Activated B cell treated with CpG ODN at 0.5 μM for 24 hours (primary cell): ENCODE measurements at regions of chr2 and their contacts with region 1.

Region 1: DNA sequence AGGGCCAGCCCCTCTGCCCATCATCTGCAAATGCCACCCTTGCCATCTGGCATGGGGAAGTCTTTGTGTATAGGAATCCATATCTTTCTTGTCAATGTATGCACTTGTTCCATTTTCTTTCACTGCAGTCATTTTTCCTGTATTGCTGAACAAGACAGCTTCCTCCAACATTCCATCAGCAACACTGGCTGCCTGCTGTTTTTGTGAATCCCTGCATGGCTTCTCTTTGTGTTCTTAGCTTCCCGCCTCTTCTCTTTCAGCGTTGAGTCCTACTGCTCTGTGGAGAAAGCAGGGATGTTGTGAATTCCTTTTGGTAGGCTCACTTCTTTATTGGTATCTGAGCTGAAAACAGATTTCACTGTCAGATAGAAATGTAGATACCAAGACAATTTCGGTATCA is 150.0 kb downstream of the LPIN1 start:
- DNase-seq: no peak
- ATAC-seq: no peak
- H3K4me3 Mint-ChIP-seq: no peak overlapping the region
- H3K27ac Mint-ChIP-seq: no peak overlapping the region
- H3K4me1 Mint-ChIP-seq: no peaks in the 10 kb centered on the region
- H3K27me3 Mint-ChIP-seq: no peaks in the 10 kb centered on the region
- CTCF ChIP-seq: no peak

Region 2: GRCh38 chr2:12176623-12177454 is 280.5 kb after region 1 on chr2:
- CTCF ChIA-PET with region 1: no interaction called
- POLR2A ChIA-PET with region 1: interaction called, 10 read pairs
- intact Hi-C with region 1: no loop called
- DNase-seq: no peak
- ATAC-seq: no peak
- H3K4me3 Mint-ChIP-seq: peak overlapping the region; percentile 33
- H3K27ac Mint-ChIP-seq: peak overlapping the region; percentile 2
- H3K4me1 Mint-ChIP-seq: peaks cover 39% of the 10 kb centered on the region
- H3K27me3 Mint-ChIP-seq: no peaks in the 10 kb centered on the region
- CTCF ChIP-seq: no peak